ENCODE measurements at regions of chr2 and their contacts with region 1.

Region 1: GRCh38 chr2:42296226-42296625 is 64.8 kb downstream of the COX7A2L start:
- DNase-seq: no peak
- H3K4me3 Mint-ChIP-seq: no peak overlapping the region
- H3K27ac Mint-ChIP-seq: no peak overlapping the region
- H3K4me1 Mint-ChIP-seq: peaks cover 32% of the 10 kb centered on the region
- H3K27me3 Mint-ChIP-seq: no peaks in the 10 kb centered on the region

Region 2: DNA sequence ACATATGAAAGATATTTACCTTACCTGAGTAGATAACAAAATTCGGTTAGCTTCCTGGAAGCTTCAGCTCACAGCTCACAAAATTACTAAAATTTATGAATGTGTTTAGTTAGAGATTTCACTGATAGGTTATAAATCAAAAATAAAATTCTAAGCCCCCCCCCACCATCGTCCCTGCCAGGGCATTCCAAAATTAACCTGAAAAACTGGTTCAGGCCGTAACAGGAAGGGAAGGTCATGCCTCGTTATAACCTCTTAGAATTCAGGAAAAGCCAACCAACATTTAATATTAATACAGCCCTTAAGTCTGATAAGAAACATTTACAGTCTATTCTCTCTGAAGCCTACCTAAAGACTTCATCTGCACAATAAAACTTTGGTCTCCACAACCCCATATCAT is 15.9 kb after region 1 on chr2:
- intact Hi-C with region 1: no loop called
- DNase-seq: no peak
- H3K4me3 Mint-ChIP-seq: no peak overlapping the region
- H3K27ac Mint-ChIP-seq: no peak overlapping the region
- H3K4me1 Mint-ChIP-seq: peaks cover 4% of the 10 kb centered on the region
- H3K27me3 Mint-ChIP-seq: no peaks in the 10 kb centered on the region

Region 3: DNA sequence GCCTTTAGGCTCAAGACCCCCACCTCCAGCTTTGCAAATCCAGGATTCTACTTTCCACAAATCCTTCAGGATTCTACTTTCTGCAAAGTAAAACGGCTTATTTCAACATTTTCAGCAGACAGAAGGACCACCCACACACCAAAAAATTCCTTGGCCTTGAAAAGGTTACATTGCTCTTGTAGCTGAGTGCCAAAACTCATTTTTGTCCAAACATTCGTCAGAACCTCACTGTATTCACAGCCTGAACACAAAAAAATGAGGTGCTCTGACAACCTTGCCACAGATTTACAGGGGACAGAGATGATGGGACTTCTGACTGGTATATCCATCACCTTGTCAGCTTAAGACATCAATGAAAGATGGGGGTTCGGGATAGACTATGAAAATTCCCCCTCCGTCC is 127.8 kb after region 1 on chr2:
- intact Hi-C with region 1: loop called (anchors 10 kb)
- DNase-seq: no peak
- H3K4me3 Mint-ChIP-seq: no peak overlapping the region
- H3K27ac Mint-ChIP-seq: no peak overlapping the region
- H3K4me1 Mint-ChIP-seq: peaks cover 28% of the 10 kb centered on the region
- H3K27me3 Mint-ChIP-seq: peaks cover 1% of the 10 kb centered on the region

Measured in activated T-helper 2 cell treated with anti-CD3 and anti-CD28 coated beads, Interferon-gamma antibody, Interleukin-2, Interleukin-4, amounts not matched to agents 10 μg/mL and 5 μg/mL and 100 μg/mL, durations not matched to agents 14 hours and 24 hours and 36 hours (primary cell).